Caco-2 (cell line): ENCODE measurements at regions of chr11 and their contacts with region 1.

Region 1: GRCh38 chr11:17129003-17129402 is 51.5 kb upstream of the RPS13 start:
- DNase-seq: no peak
- H3K4me3 ChIP-seq: no peak overlapping the region
- H3K4me3 Mint-ChIP-seq: no peak overlapping the region
- H3K27ac Mint-ChIP-seq: no peak overlapping the region
- H3K4me1 ChIP-seq: no peaks in the 10 kb centered on the region
- H3K4me1 Mint-ChIP-seq: no peaks in the 10 kb centered on the region
- H3K27me3 ChIP-seq: no peaks in the 10 kb centered on the region
- H3K27me3 Mint-ChIP-seq: no peaks in the 10 kb centered on the region
- CTCF ChIP-seq: no peak

Region 2: GRCh38 chr11:16956538-16957153 is 172.4 kb before region 1 on chr11:
- CTCF ChIA-PET with region 1: no interaction called
- POLR2A ChIA-PET with region 1: no interaction called
- intact Hi-C with region 1: loop called (anchors 1 kb)
- DNase-seq: peak; percentile 68 to 70
- H3K4me3 ChIP-seq: no peak overlapping the region
- H3K4me3 Mint-ChIP-seq: peak overlapping the region; percentile 61
- H3K27ac Mint-ChIP-seq: peak overlapping the region; percentile 76
- H3K4me1 ChIP-seq: peaks cover 68% of the 10 kb centered on the region
- H3K4me1 Mint-ChIP-seq: peaks cover 48% of the 10 kb centered on the region
- H3K27me3 ChIP-seq: no peaks in the 10 kb centered on the region
- H3K27me3 Mint-ChIP-seq: no peaks in the 10 kb centered on the region
- CTCF ChIP-seq: no peak